Activated CD8-positive, alpha-beta T cell treated with anti-CD3 and anti-CD28 coated beads for 36 hours (primary cell): ENCODE measurements at regions of chr17 and their contacts with region 1.

Region 1: DNA sequence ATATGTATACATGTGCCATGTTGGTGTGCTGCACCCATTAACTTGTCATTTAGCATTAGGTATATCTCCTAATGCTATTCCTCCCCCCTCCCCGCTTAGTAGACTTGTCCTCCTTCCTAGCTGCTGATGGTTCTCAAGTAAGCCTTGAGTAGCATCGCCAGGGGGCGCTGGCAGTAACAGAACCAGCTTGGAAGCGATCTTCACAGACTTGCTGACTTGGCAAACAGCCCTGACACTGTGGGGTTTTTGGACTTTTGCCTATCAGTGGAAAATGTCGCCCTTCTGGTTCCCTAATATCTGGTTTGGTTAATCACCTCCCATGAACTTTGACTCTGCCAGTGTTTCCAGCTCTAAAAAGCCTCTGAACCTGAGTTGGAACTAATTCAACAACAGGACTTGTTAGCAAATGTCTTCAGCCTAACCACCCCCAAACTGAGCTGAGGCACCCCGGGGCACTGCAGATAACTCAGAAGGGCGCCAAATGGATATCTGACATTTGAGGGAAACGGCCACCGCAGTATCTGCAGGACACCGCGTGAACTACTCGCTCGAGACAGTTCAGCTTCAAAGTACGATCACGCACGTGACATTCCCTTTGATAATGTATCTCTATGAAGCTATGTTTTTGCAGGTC is 15.4 kb upstream of the SPATA32 start:
- DNase-seq: peak; percentile 98
- ATAC-seq: peak; percentile 95
- H3K4me3 Mint-ChIP-seq: no peak overlapping the region
- H3K27ac Mint-ChIP-seq: peak overlapping the region; percentile 53
- H3K4me1 Mint-ChIP-seq: peaks cover 15% of the 10 kb centered on the region
- H3K27me3 Mint-ChIP-seq: no peaks in the 10 kb centered on the region
- CTCF ChIP-seq: peak; percentile 78

Region 2: GRCh38 chr17:45060797-45061605 is 216.3 kb before region 1 on chr17 and contains the start of gene NMT1:
- CTCF ChIA-PET with region 1: no interaction called
- POLR2A ChIA-PET with region 1: no interaction called
- intact Hi-C with region 1: no loop called
- DNase-seq: peak; percentile 99
- ATAC-seq: peak; percentile 92
- H3K4me3 Mint-ChIP-seq: peak within 1 kb of the TSS; percentile 89
- H3K27ac Mint-ChIP-seq: peak within 1 kb of the TSS; percentile 94
- H3K4me1 Mint-ChIP-seq: peaks cover 37% of the 10 kb centered on the region
- H3K27me3 Mint-ChIP-seq: no peaks in the 10 kb centered on the region
- CTCF ChIP-seq: no peak
- total RNA-seq, gene NMT1: 156 to 169 TPM

Region 3: GRCh38 chr17:45256114-45256966 is 21.0 kb before region 1 on chr17:
- CTCF ChIA-PET with region 1: interaction called, 25 read pairs
- POLR2A ChIA-PET with region 1: interaction called, 3 read pairs
- intact Hi-C with region 1: no loop called
- DNase-seq: peak; percentile 49
- ATAC-seq: peak; percentile 35
- H3K4me3 Mint-ChIP-seq: no peak overlapping the region
- H3K27ac Mint-ChIP-seq: peak overlapping the region; percentile 73
- H3K4me1 Mint-ChIP-seq: peaks cover 58% of the 10 kb centered on the region
- H3K27me3 Mint-ChIP-seq: no peaks in the 10 kb centered on the region
- CTCF ChIP-seq: peak; percentile 37

Region 4: GRCh38 chr17:45293413-45294211 is 16.3 kb after region 1 on chr17:
- CTCF ChIA-PET with region 1: interaction called, 81 read pairs
- POLR2A ChIA-PET with region 1: interaction called, 4 read pairs
- intact Hi-C with region 1: no loop called
- DNase-seq: peak; percentile 47
- ATAC-seq: peak; percentile 69
- H3K4me3 Mint-ChIP-seq: no peak overlapping the region
- H3K27ac Mint-ChIP-seq: peak overlapping the region; percentile 84
- H3K4me1 Mint-ChIP-seq: peaks cover 76% of the 10 kb centered on the region
- H3K27me3 Mint-ChIP-seq: no peaks in the 10 kb centered on the region
- CTCF ChIP-seq: no peak

Region 5: DNA sequence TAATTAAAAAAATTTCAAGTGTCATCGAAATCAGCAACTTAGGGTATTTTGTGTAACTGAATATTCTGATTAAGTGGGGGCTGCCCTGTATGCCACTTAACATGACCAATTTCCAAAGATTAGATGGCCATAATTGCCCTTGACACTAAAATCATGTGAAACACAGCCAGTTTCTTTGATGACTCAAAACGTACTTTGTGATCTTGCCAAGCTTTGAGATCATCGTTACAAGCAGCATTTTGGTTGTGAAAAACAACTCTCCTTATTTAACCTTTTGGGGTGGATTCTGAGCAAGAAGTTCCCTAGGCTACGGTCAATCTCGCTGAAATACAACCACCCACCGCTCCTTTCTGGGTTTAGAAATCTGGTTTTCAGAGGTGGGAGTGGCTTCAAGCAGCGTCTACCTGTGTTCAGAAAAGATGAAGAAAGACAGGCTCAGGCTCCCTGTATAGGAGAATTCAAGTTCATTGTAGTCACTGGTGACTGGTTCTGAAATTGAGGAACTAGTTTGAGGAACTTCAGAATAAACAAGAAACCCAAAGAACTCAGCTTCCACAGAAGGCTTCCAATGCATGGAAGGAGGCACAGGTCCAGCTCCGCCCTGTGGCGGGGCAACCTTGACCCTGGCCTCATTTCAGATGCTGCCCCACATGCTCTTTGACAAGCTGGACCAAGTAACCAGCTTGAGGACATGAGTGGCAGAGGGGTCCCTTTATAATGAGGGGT is 30.1 kb after region 1 on chr17:
- CTCF ChIA-PET with region 1: interaction called, 43 read pairs
- POLR2A ChIA-PET with region 1: interaction called, 11 read pairs
- intact Hi-C with region 1: loop called (anchors 5 kb)
- DNase-seq: peak; percentile 81
- ATAC-seq: peak; percentile 58
- H3K4me3 Mint-ChIP-seq: peak overlapping the region; percentile 36
- H3K27ac Mint-ChIP-seq: peak overlapping the region; percentile 95
- H3K4me1 Mint-ChIP-seq: peaks cover 83% of the 10 kb centered on the region
- H3K27me3 Mint-ChIP-seq: no peaks in the 10 kb centered on the region
- CTCF ChIP-seq: no peak

Region 6: DNA sequence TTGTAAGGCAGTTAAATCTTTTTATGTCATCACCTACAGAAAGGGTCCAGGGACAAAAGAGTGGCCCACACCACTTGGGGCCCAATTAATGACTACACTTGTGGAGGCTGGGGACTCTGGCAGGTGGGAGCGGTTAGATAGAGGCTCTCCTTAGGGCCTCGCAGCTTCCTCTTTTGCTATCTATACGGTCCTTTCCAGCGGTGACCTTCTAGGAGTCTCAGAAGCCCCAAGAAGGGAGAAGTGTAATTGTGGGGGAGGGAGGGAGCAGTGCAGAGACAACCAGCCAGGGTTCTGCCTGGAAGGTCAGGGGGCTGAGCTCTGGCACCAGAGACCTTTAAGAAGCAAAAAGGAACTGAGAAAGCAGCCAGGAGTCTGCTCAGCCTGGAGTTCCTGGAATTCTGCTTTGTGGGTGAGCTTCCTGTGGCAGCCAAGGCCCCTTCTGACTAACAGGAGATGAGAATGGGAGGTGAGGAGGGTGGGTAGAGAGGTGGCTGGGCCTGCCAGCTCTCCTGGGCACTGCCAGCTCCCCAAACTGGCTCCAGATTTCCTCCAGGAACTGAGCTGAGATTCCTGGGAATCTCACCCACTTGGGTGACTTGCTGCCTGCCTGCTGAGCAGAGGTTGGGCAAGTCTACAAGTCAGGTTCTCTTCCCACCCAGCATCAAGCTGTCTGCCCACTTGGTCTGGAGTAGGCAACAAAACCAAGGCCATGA is 55.8 kb after region 1 on chr17:
- CTCF ChIA-PET with region 1: interaction called, 11 read pairs
- POLR2A ChIA-PET with region 1: interaction called, 3 read pairs
- intact Hi-C with region 1: no loop called
- DNase-seq: peak; percentile 47
- ATAC-seq: peak; percentile 77
- H3K4me3 Mint-ChIP-seq: no peak overlapping the region
- H3K27ac Mint-ChIP-seq: peak overlapping the region; percentile 10
- H3K4me1 Mint-ChIP-seq: peaks cover 22% of the 10 kb centered on the region
- H3K27me3 Mint-ChIP-seq: no peaks in the 10 kb centered on the region
- CTCF ChIP-seq: no peak

Region 7: DNA sequence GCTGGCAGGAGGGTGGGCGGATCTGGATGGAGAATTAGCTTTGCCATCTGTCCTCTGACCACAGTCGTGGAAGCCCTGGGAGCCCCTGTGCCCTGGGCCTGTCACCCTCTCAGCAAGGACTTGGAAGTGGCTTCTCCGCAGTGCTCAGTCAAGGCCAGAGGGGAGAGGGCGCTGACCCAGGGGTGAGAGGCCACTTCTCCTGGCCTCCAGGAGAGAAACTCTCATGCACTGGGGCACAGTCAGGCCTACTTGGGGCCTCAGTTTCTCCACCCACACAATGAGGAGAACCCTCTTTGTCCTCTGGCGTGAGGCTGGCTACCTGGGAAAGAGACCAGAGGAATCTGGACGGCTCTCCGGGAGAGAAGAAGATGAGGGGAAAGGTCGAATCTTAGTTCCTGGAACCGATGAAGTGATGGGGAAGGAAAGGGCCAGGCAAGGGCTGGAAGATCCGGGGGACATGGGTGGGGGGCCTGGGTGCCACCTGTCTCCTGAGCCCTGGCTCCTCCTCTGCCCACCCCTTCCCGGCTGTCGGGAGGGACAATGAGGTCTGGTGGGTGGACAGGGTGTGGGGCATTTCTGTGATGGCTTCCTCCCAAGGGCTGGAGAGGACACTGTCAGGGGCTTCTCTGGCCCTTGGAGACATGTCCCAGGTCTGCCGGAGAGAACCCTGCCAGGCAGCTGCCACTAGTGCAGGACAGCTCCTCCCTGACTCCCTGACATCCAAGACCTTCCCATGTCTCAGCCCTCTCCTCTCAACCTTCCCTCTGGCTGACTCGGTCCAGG is 164.4 kb after region 1 on chr17:
- CTCF ChIA-PET with region 1: no interaction called
- POLR2A ChIA-PET with region 1: no interaction called
- intact Hi-C with region 1: no loop called
- DNase-seq: no peak
- ATAC-seq: no peak
- H3K4me3 Mint-ChIP-seq: no peak overlapping the region
- H3K27ac Mint-ChIP-seq: no peak overlapping the region
- H3K4me1 Mint-ChIP-seq: peaks cover 26% of the 10 kb centered on the region
- H3K27me3 Mint-ChIP-seq: no peaks in the 10 kb centered on the region
- CTCF ChIP-seq: no peak